K562 (cell line): ENCODE measurements at regions of chr1 and their contacts with region 1.

Region 1: GRCh38 chr1:70043806-70044205 is 161.6 kb downstream of the LRRC40 start:
- DNase-seq: peak in 1 of 4 experiments; percentile 41
- ATAC-seq: no peak; the same call in 2 of the 3 replicates
- H3K4me3 ChIP-seq: no peak overlapping the region
- H3K27ac ChIP-seq: peak overlapping the region; percentile 3; the same call in 2 of the 3 replicates
- H3K4me1 ChIP-seq: peaks cover 0 to 35% of the 10 kb centered on the region in 2 experiments; a peak in 3 of 5 replicates
- H3K27me3 ChIP-seq: no peaks in the 10 kb centered on the region
- CTCF ChIP-seq: no peak
- EP300 ChIP-seq: no peak
- POLR2A ChIP-seq: no peak
- RAD21 ChIP-seq: 0 out of 4 replicates have a peak, but pooled peaks of 1 of the 2 experiments have one; percentile 19

Region 2: GRCh38 chr1:69993787-69994186 is 50.0 kb before region 1 on chr1:
- CTCF ChIA-PET with region 1: no interaction called
- POLR2A ChIA-PET with region 1: no interaction called
- in situ Hi-C with region 1: no loop called
- intact Hi-C with region 1: no loop called
- DNase-seq: no peak
- ATAC-seq: no peak
- H3K4me3 ChIP-seq: no peak overlapping the region
- H3K27ac ChIP-seq: no peak overlapping the region
- H3K4me1 ChIP-seq: no peaks in the 10 kb centered on the region
- H3K27me3 ChIP-seq: 0 out of 5 replicates have a peak, but pooled peaks cover 0 to 2% of the 10 kb centered on the region in 2 experiments
- CTCF ChIP-seq: no peak
- EP300 ChIP-seq: no peak
- POLR2A ChIP-seq: no peak
- RAD21 ChIP-seq: no peak

Region 3: GRCh38 chr1:70084314-70084915 is 40.6 kb after region 1 on chr1:
- CTCF ChIA-PET with region 1: no interaction called
- POLR2A ChIA-PET with region 1: interaction called, 3 read pairs
- in situ Hi-C with region 1: no loop called
- intact Hi-C with region 1: loop called (anchors 2 kb)
- DNase-seq: no peak
- ATAC-seq: no peak
- H3K4me3 ChIP-seq: no peak overlapping the region
- H3K27ac ChIP-seq: no peak overlapping the region
- H3K4me1 ChIP-seq: no peaks in the 10 kb centered on the region
- H3K27me3 ChIP-seq: no peaks in the 10 kb centered on the region
- CTCF ChIP-seq: no peak
- EP300 ChIP-seq: no peak
- POLR2A ChIP-seq: no peak
- RAD21 ChIP-seq: no peak